ENCODE measurements at regions of chr1 and their contacts with region 1.

Region 1: DNA sequence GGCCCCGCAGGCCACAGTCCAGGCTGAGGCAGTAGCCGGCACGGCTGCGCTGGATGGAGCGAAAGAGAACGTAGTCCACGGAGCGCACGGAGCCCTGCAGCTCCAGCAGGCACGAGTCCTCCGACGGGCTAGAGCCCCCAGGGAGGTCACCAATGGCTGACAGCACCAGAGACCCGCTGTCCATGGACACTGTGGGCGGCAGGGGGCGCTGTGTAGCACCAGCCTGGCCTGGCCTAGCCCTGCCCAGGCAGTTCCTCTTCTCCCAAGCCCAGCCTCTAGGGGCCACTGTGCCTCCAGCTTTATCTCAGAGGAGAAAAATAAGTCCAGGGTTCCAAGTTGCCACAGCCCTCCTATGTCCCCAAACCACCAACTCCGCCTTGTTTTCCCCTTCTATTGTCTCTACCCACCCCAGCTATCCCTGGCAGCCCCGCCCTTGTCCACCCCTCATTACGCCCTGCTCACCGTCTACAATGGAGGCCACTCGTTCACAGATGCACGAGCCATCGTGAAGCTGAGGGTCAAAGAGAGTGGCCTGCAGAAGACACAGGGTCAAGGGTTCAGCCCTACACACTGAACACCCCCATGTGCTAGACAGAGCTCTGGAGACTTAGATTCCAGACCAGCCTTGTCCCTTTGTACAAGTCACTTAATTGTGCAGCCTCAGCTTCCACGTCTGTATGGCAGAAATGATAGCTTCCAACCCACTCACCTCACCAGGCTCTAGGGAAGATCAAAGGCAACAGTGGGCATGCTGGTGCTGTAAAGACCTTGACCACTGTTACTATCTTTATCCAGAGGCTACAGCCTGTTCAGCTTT is 4.4 kb downstream of the ENTREP3 start:
- DNase-seq: peak; percentile 98
- H3K4me3 Mint-ChIP-seq: peak overlapping the region; percentile 47
- H3K27ac Mint-ChIP-seq: no peak overlapping the region
- H3K4me1 Mint-ChIP-seq: peaks cover 26% of the 10 kb centered on the region
- H3K27me3 Mint-ChIP-seq: no peaks in the 10 kb centered on the region

Region 2: GRCh38 chr1:155184843-155185350 is 65.9 kb before region 1 on chr1:
- CTCF ChIA-PET with region 1: no interaction called
- intact Hi-C with region 1: no loop called
- DNase-seq: no peak
- H3K4me3 Mint-ChIP-seq: no peak overlapping the region
- H3K27ac Mint-ChIP-seq: no peak overlapping the region
- H3K4me1 Mint-ChIP-seq: peaks cover 3% of the 10 kb centered on the region
- H3K27me3 Mint-ChIP-seq: no peaks in the 10 kb centered on the region

Region 3: GRCh38 chr1:155208541-155209311 is 42.1 kb before region 1 on chr1 and contains the start of gene MTX1:
- CTCF ChIA-PET with region 1: interaction called, 17 read pairs
- intact Hi-C with region 1: no loop called
- DNase-seq: peak; percentile 89
- H3K4me3 Mint-ChIP-seq: peak within 1 kb of the TSS; percentile 88
- H3K27ac Mint-ChIP-seq: peak within 1 kb of the TSS; percentile 71
- H3K4me1 Mint-ChIP-seq: peaks cover 29% of the 10 kb centered on the region
- H3K27me3 Mint-ChIP-seq: no peaks in the 10 kb centered on the region
- total RNA-seq, gene MTX1: 46.8 to 47.4 TPM

Region 4: GRCh38 chr1:155277070-155277895 is 26.4 kb after region 1 on chr1 and contains the start of gene HCN3:
- CTCF ChIA-PET with region 1: interaction called, 26 read pairs
- intact Hi-C with region 1: loop called (anchors 1 kb)
- DNase-seq: peak; percentile 96
- H3K4me3 Mint-ChIP-seq: peak within 1 kb of the TSS; percentile 62
- H3K27ac Mint-ChIP-seq: no peak within 1 kb of the TSS
- H3K4me1 Mint-ChIP-seq: peaks cover 30% of the 10 kb centered on the region
- H3K27me3 Mint-ChIP-seq: no peaks in the 10 kb centered on the region
- total RNA-seq, gene HCN3: 0.79 to 1.6 TPM

Region 5: DNA sequence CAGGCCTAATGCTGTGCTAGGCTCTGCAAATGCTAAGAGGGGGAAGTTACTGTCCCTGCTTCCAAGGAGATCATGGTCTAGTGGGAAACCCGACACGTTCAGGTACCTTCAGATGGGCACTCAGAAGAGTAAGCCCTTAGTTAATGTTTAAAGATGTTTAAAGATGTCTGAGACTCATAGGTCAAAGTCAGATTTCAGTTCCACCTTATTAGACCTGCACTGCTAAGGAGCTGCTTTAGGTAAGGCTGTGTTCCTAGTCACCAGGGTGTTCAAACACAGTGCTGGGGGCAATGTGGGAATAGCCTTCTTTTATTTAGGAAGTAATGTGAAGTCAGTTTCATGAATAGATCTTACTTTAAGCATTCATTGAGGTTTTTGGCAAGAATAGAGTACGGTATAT is 66.1 kb after region 1 on chr1:
- CTCF ChIA-PET with region 1: interaction called, 118 read pairs
- intact Hi-C with region 1: no loop called
- DNase-seq: no peak
- H3K4me3 Mint-ChIP-seq: no peak overlapping the region
- H3K27ac Mint-ChIP-seq: no peak overlapping the region
- H3K4me1 Mint-ChIP-seq: peaks cover 38% of the 10 kb centered on the region
- H3K27me3 Mint-ChIP-seq: no peaks in the 10 kb centered on the region

Region 6: GRCh38 chr1:155504207-155504606 is 253.4 kb after region 1 on chr1:
- CTCF ChIA-PET with region 1: interaction called, 3 read pairs
- intact Hi-C with region 1: loop called (anchors 5 kb)
- DNase-seq: no peak
- H3K4me3 Mint-ChIP-seq: no peak overlapping the region
- H3K27ac Mint-ChIP-seq: no peak overlapping the region
- H3K4me1 Mint-ChIP-seq: peaks cover 42% of the 10 kb centered on the region
- H3K27me3 Mint-ChIP-seq: no peaks in the 10 kb centered on the region

Measured in activated naive CD4-positive, alpha-beta T cell treated with anti-CD3 and anti-CD28 coated beads for 36 hours (primary cell).